GM18951 (cell line): ENCODE measurements at regions of chr10 and their contacts with region 1.

Region 1: DNA sequence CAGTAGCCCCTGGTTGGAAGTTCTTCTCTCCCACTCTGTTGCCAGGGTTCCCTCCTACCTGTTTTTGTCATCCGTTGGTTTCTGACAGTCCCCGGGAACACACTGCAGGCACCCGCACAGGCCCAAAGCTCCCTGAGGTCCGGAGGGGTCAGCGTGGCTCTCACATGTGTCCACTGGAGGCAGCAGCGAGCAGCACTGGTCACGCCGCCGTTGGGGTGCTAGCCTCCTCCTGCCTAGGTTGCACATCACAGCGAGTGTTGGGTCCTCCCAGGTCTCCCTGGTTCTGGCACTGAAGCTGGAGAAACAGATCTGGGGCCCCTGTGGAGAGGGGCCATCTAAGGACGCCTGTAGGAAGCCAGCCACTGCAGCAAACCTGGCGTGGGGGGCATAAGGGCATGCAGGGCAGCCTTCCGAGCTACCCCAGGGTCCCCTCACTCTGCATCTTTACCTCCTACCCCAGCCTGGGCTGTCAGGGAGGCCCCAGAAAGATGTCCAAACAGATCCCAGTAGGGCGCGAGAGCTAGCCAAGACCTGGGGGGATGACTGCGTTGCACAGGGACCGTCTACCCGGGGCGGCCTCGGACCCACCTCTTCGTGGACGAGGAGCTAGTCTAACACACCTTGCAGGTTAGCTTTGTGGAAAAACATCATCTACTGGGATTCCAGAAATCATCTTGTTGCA is 28.9 kb downstream of the LRRC27 start:
- POLR2A ChIP-seq: no peak

Region 2: GRCh38 chr10:132223156-132223590 is 137.7 kb before region 1 on chr10:
- in situ Hi-C with region 1: loop called (anchors 10 kb)
- POLR2A ChIP-seq: no peak

Region 3: DNA sequence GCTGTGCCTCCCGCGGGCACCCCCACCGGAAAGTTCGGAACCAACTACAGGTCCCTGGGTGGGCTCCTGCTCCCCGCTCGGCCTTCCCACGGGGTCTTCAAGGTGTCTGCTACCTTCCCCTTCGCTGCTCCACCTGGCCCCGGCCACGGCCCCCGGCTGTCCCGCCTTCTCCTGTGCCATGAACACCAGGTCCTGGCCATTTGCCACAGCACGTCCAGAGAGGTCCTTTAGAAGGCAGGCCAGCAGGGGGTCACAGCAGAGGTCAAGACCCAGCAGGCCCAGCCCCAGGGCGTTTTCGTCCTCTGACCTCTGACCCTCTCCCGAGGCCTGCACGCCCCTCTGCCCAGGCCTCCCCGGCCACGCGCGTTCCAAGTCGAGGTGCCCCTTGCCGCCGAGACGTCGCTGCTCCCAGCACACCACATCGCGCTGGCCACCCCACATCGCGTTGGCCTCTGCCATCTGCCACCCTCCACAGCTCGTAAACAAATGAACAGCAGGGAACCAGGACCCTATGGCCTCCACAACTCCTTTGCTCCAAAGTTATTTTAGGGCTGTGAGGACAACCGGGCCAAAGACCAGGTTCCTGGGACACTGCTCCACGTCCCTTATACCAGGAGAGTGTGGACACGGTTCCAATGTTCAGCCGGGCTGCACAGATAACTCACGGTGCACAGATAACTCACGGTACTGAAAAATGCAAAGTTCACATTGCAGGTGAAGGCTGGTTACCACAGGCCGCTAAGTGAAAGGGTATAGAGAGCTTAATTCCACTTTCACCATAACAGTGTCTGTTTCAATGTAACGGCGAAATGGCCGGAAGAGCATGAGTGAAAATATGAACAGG is 507.1 kb after region 1 on chr10:
- in situ Hi-C with region 1: no loop called
- POLR2A ChIP-seq: no peak